ENCODE measurements at regions of chr13 and their contacts with region 1.

Region 1: GRCh38 chr13:73228546-73228945 is 169.7 kb downstream of the KLF5 start:
- DNase-seq: peak; percentile 8
- H3K4me3 Mint-ChIP-seq: no peak overlapping the region
- H3K27ac Mint-ChIP-seq: peak overlapping the region; percentile 1
- H3K4me1 Mint-ChIP-seq: peaks cover 30% of the 10 kb centered on the region
- H3K27me3 Mint-ChIP-seq: peaks cover 2% of the 10 kb centered on the region

Region 2: GRCh38 chr13:72864142-72865011 is 364.2 kb before region 1 on chr13:
- intact Hi-C with region 1: loop called (anchors 10 kb)
- DNase-seq: no peak
- H3K4me3 Mint-ChIP-seq: no peak overlapping the region
- H3K27ac Mint-ChIP-seq: peak overlapping the region; percentile 82
- H3K4me1 Mint-ChIP-seq: peaks cover 12% of the 10 kb centered on the region
- H3K27me3 Mint-ChIP-seq: no peaks in the 10 kb centered on the region

Region 3: DNA sequence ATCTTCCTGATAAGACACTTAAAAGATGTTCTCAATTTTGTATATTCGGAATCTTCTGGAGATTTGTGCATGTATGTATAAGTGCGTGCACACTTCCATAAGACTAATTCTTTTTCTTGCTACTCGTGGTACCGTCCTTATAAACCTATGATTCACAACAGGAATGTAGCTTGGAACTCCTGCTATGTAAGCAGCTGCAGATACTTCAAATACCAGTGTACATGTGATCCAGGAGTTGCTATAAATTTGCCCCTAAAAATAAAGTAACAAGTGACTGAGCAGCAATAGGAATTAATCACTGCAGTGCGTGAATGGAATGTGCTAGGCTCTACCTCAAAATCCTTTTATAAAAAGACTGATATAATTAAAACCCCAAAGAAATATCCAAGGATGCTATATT is 45.2 kb after region 1 on chr13:
- intact Hi-C with region 1: loop called (anchors 2 kb)
- DNase-seq: no peak
- H3K4me3 Mint-ChIP-seq: no peak overlapping the region
- H3K27ac Mint-ChIP-seq: no peak overlapping the region
- H3K4me1 Mint-ChIP-seq: peaks cover 44% of the 10 kb centered on the region
- H3K27me3 Mint-ChIP-seq: no peaks in the 10 kb centered on the region

Measured in activated T-helper 1 cell treated with anti-CD3 and anti-CD28 coated beads, Interleukin-12 subunit alpha, Interleukin-12 subunit beta, Interleukin-2, Interleukin-4 antibody, amounts not matched to agents 30 ng/mL and 10 ng/mL and 1 ng/mL, durations not matched to agents 14 hours and 24 hours and 36 hours (primary cell).